ENCODE measurements at regions of chr15 and their contacts with region 1.

Region 1: GRCh38 chr15:95259513-95259912 is 1028.2 kb downstream of the MCTP2 start:
- DNase-seq: peak; percentile 49
- H3K4me3 Mint-ChIP-seq: no peak overlapping the region
- H3K27ac Mint-ChIP-seq: no peak overlapping the region
- H3K4me1 Mint-ChIP-seq: peaks cover 12% of the 10 kb centered on the region
- H3K27me3 Mint-ChIP-seq: peaks cover 54% of the 10 kb centered on the region

Region 2: DNA sequence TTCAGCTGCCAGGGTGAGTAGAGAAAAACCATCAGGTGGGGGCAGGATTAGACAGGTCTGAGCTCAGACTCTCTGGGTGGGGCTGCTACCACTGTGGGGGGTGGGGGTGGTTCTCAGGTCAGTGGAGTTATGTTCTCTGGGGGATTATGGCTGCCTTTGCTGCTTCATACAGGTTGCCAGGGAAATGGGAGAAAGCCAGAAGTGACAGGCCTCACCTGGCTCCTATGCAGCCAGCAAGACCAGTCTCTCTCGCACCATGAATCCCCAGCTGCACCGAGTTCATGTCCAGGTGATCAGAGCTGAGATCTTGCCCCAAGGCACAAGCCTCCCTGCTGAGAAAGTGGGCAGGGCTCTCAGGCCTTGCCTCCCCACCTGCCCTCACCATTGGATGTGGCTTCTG is 200.1 kb before region 1 on chr15:
- intact Hi-C with region 1: no loop called
- DNase-seq: no peak
- H3K4me3 Mint-ChIP-seq: no peak overlapping the region
- H3K27ac Mint-ChIP-seq: no peak overlapping the region
- H3K4me1 Mint-ChIP-seq: no peaks in the 10 kb centered on the region
- H3K27me3 Mint-ChIP-seq: no peaks in the 10 kb centered on the region

Region 3: DNA sequence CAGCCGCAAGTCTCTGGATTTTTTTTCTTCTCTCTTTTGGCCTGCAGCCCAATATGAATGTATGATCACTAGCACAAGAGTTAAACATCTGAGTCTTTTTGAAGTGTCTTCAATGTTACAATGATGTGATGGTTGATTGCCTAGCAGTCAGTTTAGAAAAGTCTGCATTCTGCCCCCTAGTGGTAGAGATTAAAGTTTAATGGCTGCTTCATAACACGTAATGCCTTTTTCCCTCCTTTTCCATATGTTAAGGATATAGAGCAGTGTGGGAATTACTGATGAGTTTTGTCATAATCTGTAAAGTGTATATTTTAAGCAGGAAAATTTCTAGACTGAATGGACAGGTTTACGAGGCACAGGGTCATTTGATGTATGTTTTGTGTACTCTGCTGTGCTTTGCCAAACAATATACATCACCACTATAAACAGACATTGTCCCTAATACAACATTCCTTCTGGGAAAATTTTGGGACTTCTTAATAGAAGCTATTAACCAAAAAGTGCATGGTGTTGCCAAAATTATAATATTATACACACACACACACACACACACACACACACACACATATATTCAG is 32.5 kb after region 1 on chr15:
- intact Hi-C with region 1: loop called (anchors 1 kb)
- DNase-seq: no peak
- H3K4me3 Mint-ChIP-seq: no peak overlapping the region
- H3K27ac Mint-ChIP-seq: no peak overlapping the region
- H3K4me1 Mint-ChIP-seq: peaks cover 47% of the 10 kb centered on the region
- H3K27me3 Mint-ChIP-seq: peaks cover 40% of the 10 kb centered on the region

Region 4: GRCh38 chr15:95479308-95479707 is 219.8 kb after region 1 on chr15:
- intact Hi-C with region 1: no loop called
- DNase-seq: no peak
- H3K4me3 Mint-ChIP-seq: no peak overlapping the region
- H3K27ac Mint-ChIP-seq: no peak overlapping the region
- H3K4me1 Mint-ChIP-seq: no peaks in the 10 kb centered on the region
- H3K27me3 Mint-ChIP-seq: peaks cover 5% of the 10 kb centered on the region

Region 5: DNA sequence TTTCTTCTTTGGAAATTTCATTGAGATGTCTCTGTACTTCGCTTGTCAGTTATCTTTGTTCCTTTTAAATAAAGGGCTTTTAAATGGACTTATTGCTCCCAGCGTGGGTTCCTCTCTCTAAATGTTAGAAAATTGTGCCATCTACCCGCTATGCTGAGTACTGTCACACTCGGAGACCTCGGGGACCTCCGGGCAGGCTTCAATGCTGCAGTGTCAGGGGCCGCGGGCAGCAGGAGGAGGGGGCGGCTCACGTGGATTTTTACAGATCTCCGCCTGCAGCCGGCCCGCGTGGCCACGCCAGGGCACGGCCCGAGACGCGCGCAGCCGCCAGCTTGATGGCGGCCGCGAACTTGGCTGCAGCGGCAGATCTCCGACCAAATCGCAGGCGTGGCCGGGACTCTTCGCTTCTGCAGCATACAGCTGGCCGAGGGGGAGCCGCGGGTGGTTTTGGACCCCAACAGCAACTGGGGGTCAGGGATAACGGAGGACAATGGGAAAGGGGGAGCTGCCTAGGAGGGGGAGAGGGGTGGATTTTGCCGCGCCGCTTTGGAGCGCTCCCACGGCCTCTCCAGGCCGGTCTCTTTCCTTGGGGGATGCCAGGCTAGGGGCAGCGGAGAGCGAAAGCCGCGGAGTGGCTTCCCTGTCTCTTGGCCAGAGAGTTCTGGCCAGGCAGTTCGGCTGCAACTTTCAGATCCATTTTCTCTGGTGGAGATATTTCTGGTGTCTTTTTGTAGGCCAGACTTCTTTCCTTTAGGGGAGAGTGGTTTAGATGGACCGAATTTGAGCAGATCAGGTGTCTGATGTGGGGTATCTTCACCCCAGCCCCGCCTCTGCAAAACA is 1086.3 kb after region 1 on chr15:
- intact Hi-C with region 1: loop called (anchors 1 kb)
- DNase-seq: no peak
- H3K4me3 Mint-ChIP-seq: peak overlapping the region; percentile 0
- H3K27ac Mint-ChIP-seq: peak overlapping the region; percentile 31
- H3K4me1 Mint-ChIP-seq: peaks cover 4% of the 10 kb centered on the region
- H3K27me3 Mint-ChIP-seq: peaks cover 87% of the 10 kb centered on the region

Measured in activated T-helper 1 cell treated with anti-CD3 and anti-CD28 coated beads, Interleukin-12 subunit alpha, Interleukin-12 subunit beta, Interleukin-2, Interleukin-4 antibody, amounts not matched to agents 30 ng/mL and 10 ng/mL and 1 ng/mL, durations not matched to agents 14 hours and 24 hours and 36 hours (primary cell).